ENCODE measurements at regions of chr14 and their contacts with region 1.

Region 1: DNA sequence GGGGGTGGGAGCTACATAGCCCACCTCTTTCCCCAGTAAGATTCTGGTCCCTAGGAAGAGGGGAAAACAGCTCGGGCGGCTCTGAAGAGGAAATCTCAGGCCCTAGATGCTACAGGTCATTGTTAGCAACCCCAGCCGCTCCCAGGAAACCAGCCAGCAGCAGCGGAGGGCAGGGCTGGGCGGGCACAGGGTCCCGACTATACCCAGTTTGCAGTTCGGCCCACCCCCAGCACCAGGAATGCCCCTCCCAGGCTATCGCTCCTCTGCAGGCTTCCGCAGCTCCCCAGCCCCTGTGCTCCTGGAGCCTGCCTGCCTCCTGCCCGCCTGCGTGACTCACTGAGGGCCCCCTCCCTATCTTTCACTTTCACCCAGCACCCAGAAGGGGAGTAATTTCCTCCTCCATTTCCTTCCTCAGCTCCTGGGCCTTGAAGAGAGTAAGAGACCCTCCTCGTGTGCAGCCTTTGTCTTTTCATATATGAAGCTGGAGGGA is 27.2 kb upstream of the PNMA1 start:
- DNase-seq: peak; percentile 84 to 93
- H3K4me3 ChIP-seq: peak overlapping the region; percentile 46; the same call in 1 of the 2 replicates
- H3K27ac ChIP-seq: peak overlapping the region; percentile 90
- H3K4me1 ChIP-seq: peaks cover 71% of the 10 kb centered on the region
- H3K27me3 ChIP-seq: no peaks in the 10 kb centered on the region
- CTCF ChIP-seq: no peak

Region 2: DNA sequence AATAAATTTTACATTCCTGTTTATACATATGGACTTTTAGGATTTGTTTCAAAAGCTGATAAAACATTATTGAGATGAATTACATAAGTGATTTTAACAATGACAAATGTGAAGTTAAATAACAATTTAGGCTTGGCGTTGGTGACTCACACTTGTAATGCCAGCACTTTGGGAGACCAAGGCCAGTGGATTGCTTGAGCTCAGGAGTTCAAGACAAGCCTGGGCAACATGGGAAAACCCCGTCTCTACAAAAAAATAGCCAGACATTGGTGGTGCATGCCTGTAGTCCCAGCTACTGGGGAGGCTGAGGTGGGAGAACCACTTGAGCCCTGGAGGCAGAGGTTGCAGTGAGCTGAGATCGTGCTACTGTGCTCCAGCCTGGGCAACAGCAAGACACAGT is 165.0 kb before region 1 on chr14:
- CTCF ChIA-PET with region 1: interaction called, 19 read pairs
- POLR2A ChIA-PET with region 1: no interaction called
- intact Hi-C with region 1: no loop called
- DNase-seq: peak in 1 of 2 experiments; percentile 48
- H3K4me3 ChIP-seq: no peak overlapping the region
- H3K27ac ChIP-seq: no peak overlapping the region
- H3K4me1 ChIP-seq: peaks cover 18% of the 10 kb centered on the region
- H3K27me3 ChIP-seq: no peaks in the 10 kb centered on the region
- CTCF ChIP-seq: no peak

Region 3: GRCh38 chr14:73599499-73599898 is 141.9 kb before region 1 on chr14:
- CTCF ChIA-PET with region 1: no interaction called
- POLR2A ChIA-PET with region 1: no interaction called
- intact Hi-C with region 1: no loop called
- DNase-seq: no peak
- H3K4me3 ChIP-seq: no peak overlapping the region
- H3K27ac ChIP-seq: no peak overlapping the region
- H3K4me1 ChIP-seq: peaks cover 32% of the 10 kb centered on the region
- H3K27me3 ChIP-seq: no peaks in the 10 kb centered on the region
- CTCF ChIP-seq: no peak

Region 4: GRCh38 chr14:73759714-73760597 is 18.5 kb after region 1 on chr14:
- CTCF ChIA-PET with region 1: interaction called, 9 read pairs
- POLR2A ChIA-PET with region 1: interaction called, 16 read pairs
- intact Hi-C with region 1: no loop called
- DNase-seq: peak; percentile 96
- H3K4me3 ChIP-seq: peak overlapping the region; percentile 90
- H3K27ac ChIP-seq: peak overlapping the region; percentile 76
- H3K4me1 ChIP-seq: peaks cover 54% of the 10 kb centered on the region
- H3K27me3 ChIP-seq: no peaks in the 10 kb centered on the region
- CTCF ChIP-seq: no peak

Region 5: DNA sequence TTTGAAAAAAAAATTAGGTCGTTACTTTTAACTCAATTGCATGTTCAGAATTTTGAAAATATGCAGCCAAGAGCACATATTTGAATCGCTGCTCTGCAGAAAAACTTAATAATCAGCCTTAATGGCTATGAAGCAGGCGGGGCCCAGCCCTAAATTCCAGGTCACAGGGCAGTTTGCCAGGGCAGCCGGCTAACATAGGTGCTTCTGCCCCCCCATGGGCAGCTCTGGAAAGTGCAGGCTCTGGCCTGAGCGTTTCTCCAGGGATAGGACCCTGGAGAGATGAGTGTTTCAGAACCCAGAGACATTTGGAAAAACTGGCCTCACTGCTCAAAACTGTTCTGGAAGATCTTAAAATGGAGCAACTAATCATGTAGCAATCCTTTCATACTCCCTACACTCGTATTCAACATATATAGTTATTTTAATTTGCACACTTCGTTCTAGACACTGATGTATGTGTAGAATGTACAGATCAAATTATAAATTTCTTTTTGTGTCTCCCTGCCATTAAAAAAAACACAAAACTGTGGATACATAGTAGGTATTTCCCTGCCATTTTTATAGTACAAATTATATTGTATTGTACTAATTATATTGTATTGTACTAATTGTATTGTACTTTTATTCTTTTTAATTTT is 84.2 kb after region 1 on chr14:
- CTCF ChIA-PET with region 1: interaction called, 4 read pairs
- POLR2A ChIA-PET with region 1: interaction called, 3 read pairs
- intact Hi-C with region 1: loop called (anchors 5 kb)
- DNase-seq: peak; percentile 68 to 86
- H3K4me3 ChIP-seq: no peak overlapping the region
- H3K27ac ChIP-seq: no peak overlapping the region
- H3K4me1 ChIP-seq: peaks cover 33% of the 10 kb centered on the region
- H3K27me3 ChIP-seq: no peaks in the 10 kb centered on the region
- CTCF ChIP-seq: peak; percentile 85

Region 6: DNA sequence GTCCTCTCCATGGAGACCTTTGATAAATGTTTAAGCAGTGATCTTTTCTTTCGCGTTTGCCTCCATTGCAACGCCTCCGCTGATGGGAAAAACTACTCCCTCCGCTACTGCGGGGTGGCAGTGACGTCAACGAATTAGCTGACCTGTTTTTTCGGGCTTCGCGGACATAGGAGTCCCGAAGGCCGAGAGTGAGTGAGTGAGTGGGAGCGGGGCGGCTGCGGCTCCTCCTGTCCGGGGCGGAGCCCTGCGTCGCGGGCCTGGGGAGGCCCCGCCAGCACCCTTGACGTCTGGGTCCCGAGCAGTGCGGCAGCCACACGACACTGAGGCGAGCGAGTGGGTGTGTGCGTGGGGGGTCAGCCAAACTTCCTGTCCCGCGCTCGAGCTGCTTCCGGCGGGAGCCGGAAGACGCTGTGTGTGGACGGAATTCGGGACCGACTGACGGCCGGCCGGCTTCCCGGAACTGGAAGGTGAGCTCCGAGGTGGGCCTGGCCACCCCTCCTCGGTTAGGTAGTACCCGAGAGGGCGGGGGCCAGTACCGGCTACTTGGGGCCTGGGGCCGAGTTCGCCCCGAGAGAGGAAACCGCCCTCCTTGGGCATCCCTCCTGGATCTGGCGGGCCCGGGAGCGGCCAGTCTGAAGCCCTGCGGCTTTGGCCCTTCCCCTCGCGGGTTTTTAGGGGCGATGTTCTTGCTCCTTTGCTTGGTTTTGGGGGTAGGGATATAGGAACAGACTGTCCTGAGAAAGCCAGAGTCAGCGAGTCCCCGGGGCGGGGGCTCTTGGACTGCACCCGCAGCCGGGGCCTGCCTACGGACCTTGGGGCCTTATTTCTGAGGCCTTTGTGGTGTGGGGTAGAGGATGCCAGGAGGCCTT is 145.3 kb after region 1 on chr14 and contains the start of gene ZNF410:
- CTCF ChIA-PET with region 1: no interaction called
- POLR2A ChIA-PET with region 1: no interaction called
- intact Hi-C with region 1: loop called (anchors 5 kb)
- DNase-seq: peak; percentile 85 to 91
- H3K4me3 ChIP-seq: peak within 1 kb of the TSS; percentile 91
- H3K27ac ChIP-seq: peak within 1 kb of the TSS; percentile 70
- H3K4me1 ChIP-seq: peaks cover 32% of the 10 kb centered on the region
- H3K27me3 ChIP-seq: no peaks in the 10 kb centered on the region
- CTCF ChIP-seq: no peak
- total RNA-seq, gene ZNF410: 38.6 and 40.2 TPM in 2 replicates

Region 7: DNA sequence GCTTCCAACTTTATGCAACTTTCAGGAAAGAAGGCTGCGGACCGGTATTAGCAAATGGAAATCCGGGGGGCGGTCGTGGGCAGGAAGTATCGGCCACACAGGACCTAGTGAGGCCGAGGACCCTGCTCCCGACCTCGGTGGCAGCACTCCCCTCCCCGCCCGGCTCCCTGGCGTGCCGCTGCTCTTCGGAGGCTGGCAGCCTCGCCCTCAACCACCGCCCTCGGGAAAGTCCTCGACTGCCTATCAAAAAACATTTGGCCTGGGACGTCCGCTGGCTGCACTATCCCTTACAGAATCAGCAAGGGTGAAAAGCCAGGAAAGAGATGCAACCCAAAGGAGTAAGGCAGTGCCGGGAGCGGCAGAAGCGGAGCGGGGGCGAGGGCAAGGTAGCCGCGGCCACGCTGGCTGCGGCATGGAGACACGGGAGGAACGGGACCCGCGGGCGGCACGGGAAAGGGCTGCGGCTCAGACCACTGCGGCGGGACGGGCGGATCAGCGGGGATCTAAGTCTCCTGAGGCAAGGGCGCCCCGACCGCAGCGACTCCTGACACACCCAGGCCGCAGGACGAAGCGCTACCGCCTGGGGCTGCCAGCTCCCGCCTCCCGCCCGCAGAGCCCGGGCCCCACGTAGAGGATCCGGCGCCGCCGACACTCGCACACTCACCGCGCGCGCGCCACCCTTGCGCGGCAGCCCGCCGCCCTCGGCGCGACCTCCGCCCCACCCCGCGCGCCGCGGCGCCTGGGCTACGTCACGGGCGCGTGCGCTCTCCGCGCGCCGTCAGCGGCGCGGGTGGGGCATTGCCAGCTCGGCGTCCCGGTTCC is 277.4 kb after region 1 on chr14 and contains the starts of genes BBOF1 and ENTPD5:
- CTCF ChIA-PET with region 1: no interaction called
- POLR2A ChIA-PET with region 1: no interaction called
- intact Hi-C with region 1: no loop called
- DNase-seq: peak; percentile 57 to 87
- H3K4me3 ChIP-seq: peak within 1 kb of the TSS; percentile 79
- H3K27ac ChIP-seq: peak within 1 kb of the TSS; percentile 81
- H3K4me1 ChIP-seq: peaks cover 8% of the 10 kb centered on the region
- H3K27me3 ChIP-seq: no peaks in the 10 kb centered on the region
- CTCF ChIP-seq: no peak
- total RNA-seq, gene BBOF1: 5.5 and 6.8 TPM in 2 replicates
- total RNA-seq, gene ENTPD5: 12.3 and 12.6 TPM in 2 replicates

Measured in PC-9 (cell line).